ENCODE measurements at regions of chr15 and their contacts with region 1.

Region 1: DNA sequence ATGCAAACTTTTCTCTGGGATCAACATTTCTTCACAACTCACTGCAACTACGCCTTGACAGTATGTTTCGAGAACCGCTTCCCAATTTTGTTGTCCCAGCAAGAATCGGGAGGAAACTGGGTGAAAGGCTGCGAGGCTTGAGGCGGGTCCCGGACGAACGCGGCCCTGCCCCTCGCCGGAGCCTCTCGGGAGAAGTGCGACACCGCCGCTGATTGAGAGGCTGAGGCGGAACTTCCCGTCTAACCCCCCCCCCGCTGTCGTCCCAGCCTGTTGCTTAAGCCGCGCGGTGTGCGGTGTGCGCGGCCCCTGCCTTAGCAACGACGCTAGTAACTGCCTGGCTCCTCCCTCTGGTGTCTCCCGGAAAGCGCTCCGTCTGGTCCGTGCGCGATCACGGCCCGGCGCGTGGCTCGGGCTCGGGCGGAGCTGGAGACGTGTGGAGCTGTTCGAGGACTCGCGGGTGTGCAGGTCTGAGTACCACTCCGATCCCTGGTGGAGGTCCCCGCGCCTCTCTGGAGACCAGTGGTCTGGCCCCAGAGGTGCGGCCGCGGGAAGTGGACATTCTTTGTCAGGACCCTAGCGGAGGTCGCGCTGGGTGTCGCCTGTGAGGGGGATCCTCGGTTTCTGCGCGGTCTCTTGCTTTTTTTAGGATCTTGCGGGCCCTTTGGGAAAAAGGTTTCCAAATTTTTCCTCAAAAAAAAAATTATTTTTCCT is at the starts of genes DTWD1 and FAM227B:
- DNase-seq: peak; percentile 95 to 97
- ATAC-seq: peak; percentile 97 to 98
- H3K4me3 ChIP-seq: peak within 1 kb of the TSS; percentile 85 to 99 (median 88)
- H3K27ac ChIP-seq: peak within 1 kb of the TSS; percentile 90 to 96 (median 92)
- H3K4me1 ChIP-seq: peaks cover 35 to 40% of the 10 kb centered on the region in 2 donors
- H3K27me3 ChIP-seq: no peaks in the 10 kb centered on the region
- CTCF ChIP-seq: peak in 4 of 5 experiments; percentile 4 to 32 (median 17)
- POLR2A ChIP-seq: peak; percentile 81 to 83
- total RNA-seq, gene DTWD1: 8.5 to 16.5 (median 11.8) TPM
- total RNA-seq, gene FAM227B: 7.5 to 15.4 (median 11.7) TPM

Region 2: GRCh38 chr15:49046220-49047102 is 574.4 kb before region 1 on chr15 and contains the start of gene SECISBP2L:
- in situ Hi-C with region 1: no loop called
- intact Hi-C with region 1: loop called (anchors 5 kb)
- DNase-seq: peak; percentile 85 to 88
- ATAC-seq: peak; percentile 97 to 99
- H3K4me3 ChIP-seq: peak within 1 kb of the TSS; percentile 89 to 99 (median 95)
- H3K27ac ChIP-seq: peak within 1 kb of the TSS; percentile 77 to 88 (median 84)
- H3K4me1 ChIP-seq: peaks cover 24 to 29% of the 10 kb centered on the region in 2 donors
- H3K27me3 ChIP-seq: no peaks in the 10 kb centered on the region
- CTCF ChIP-seq: peak in 2 of 5 experiments; percentile 9 to 14
- POLR2A ChIP-seq: peak; percentile 63 to 66
- total RNA-seq, gene SECISBP2L: 23.7 to 27.5 (median 24.5) TPM

Region 3: GRCh38 chr15:49235446-49236124 is 385.2 kb before region 1 on chr15:
- in situ Hi-C with region 1: loop called in 1 of 4 experiments (anchors 25 kb)
- intact Hi-C with region 1: no loop called
- DNase-seq: peak; percentile 40 to 42
- ATAC-seq: peak; percentile 86 to 89
- H3K4me3 ChIP-seq: no peak overlapping the region
- H3K27ac ChIP-seq: no peak overlapping the region
- H3K4me1 ChIP-seq: peaks cover 6 to 22% of the 10 kb centered on the region in 2 donors
- H3K27me3 ChIP-seq: no peaks in the 10 kb centered on the region
- CTCF ChIP-seq: peak; percentile 64 to 88 (median 77)
- POLR2A ChIP-seq: no peak

Region 4: DNA sequence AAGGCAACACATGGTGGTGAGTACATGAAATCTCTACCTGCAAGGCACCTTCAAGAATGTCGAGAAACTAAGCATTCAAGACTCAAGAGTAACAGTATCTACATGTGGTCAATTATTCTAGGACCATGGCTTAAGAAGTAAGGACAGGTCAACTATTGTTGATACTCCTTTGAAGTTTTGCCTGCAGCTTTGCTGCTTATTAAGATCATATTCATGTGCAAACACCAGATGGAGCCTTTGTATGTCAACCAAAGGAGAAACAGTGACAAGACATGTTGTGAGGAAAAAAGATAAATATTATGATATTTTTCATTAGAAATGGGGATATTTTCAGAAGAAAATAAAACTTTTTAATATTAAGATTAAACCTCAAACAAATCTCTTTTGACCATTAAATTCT is 250.0 kb before region 1 on chr15:
- in situ Hi-C with region 1: no loop called
- intact Hi-C with region 1: no loop called
- DNase-seq: no peak
- ATAC-seq: no peak
- H3K4me3 ChIP-seq: no peak overlapping the region
- H3K27ac ChIP-seq: no peak overlapping the region
- H3K4me1 ChIP-seq: no peaks in the 10 kb centered on the region
- H3K27me3 ChIP-seq: no peaks in the 10 kb centered on the region
- CTCF ChIP-seq: no peak
- POLR2A ChIP-seq: no peak

Region 5: DNA sequence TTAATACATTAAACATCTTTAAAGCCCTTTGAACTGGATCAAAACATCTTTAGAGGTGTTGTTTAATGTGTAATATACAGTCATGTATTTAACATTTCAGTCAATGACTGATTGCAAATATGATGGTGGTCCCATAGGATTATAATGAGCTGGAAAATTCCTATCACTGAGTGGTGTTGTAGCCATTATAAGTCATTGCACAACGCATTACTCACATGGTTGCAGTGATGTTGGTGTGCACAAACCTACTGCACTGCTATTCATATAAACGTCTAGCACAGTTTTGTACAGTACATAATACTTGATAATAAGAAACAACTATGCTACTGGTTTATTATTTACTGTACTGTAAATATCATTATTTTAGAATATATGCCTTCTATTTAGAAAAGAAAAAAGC is 75.6 kb after region 1 on chr15:
- in situ Hi-C with region 1: no loop called
- intact Hi-C with region 1: no loop called
- DNase-seq: no peak
- ATAC-seq: no peak
- H3K4me3 ChIP-seq: no peak overlapping the region
- H3K27ac ChIP-seq: no peak overlapping the region
- H3K4me1 ChIP-seq: no peaks in the 10 kb centered on the region
- H3K27me3 ChIP-seq: no peaks in the 10 kb centered on the region
- CTCF ChIP-seq: no peak
- POLR2A ChIP-seq: no peak

Region 6: GRCh38 chr15:50354838-50355618 is 734.2 kb after region 1 on chr15 and contains the start of gene GABPB1:
- in situ Hi-C with region 1: no loop called
- intact Hi-C with region 1: loop called (anchors 2 kb)
- DNase-seq: peak; percentile 79 to 80
- ATAC-seq: peak; percentile 87 to 90
- H3K4me3 ChIP-seq: peak within 1 kb of the TSS; percentile 79 to 94 (median 81)
- H3K27ac ChIP-seq: peak within 1 kb of the TSS; percentile 93 to 97 (median 94)
- H3K4me1 ChIP-seq: peaks cover 44 to 46% of the 10 kb centered on the region in 2 donors
- H3K27me3 ChIP-seq: no peaks in the 10 kb centered on the region
- CTCF ChIP-seq: no peak
- POLR2A ChIP-seq: peak; percentile 53 to 64
- total RNA-seq, gene GABPB1: 7.4 to 11.5 (median 8.7) TPM

Measured in gastrocnemius medialis (tissue), 4 donors.